ENCODE measurements at regions of chr1 and their contacts with region 1.

Region 1: GRCh38 chr1:154558575-154559465 is at the start of gene UBE2Q1:
- DNase-seq: peak; percentile 98 to 100 (median 99)

Region 2: DNA sequence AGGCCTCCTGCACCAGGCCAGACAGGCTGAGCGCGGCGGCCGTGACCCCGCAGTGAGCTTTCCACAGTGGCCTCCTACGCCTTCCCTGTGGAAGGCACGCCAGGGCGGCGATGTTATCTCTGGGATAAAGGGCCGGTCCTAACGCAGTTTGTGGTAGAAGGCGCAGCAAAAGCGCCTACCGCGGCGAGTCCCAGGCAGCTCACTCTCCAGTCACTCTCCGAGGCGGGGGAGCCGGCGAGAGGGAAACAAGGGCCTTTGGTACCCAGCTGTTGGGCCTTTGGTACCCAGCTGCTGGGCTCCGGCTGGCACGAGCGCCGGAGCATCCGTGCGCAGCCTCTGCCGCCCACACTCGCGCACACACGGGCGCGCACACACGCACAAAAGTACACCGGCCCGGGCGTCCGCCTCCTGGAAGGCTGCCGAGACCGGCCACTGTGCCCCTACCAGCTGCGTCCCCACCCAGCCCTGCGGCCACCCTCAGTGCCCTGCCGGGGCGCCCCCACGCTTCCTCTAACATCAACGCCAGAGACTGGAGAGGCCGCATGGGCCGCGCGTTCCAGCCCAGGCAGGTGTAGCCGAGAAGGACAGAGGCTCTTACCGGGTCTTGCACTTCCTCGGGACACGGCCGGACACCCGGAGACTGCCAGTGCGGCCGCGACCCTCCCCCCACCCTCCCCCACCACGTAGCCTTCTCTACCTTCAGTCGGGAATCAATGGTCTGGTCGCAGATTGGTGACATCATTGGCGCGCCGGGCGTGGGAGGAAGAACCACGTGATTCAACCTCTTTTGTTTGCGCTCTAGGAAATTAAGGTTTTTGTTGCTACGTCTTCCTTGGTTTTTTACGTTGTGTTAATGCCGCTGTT is 68.7 kb after region 1 on chr1:
- intact Hi-C with region 1: loop called (anchors 2 kb)
- DNase-seq: peak; percentile 79 to 97 (median 90)

Region 3: DNA sequence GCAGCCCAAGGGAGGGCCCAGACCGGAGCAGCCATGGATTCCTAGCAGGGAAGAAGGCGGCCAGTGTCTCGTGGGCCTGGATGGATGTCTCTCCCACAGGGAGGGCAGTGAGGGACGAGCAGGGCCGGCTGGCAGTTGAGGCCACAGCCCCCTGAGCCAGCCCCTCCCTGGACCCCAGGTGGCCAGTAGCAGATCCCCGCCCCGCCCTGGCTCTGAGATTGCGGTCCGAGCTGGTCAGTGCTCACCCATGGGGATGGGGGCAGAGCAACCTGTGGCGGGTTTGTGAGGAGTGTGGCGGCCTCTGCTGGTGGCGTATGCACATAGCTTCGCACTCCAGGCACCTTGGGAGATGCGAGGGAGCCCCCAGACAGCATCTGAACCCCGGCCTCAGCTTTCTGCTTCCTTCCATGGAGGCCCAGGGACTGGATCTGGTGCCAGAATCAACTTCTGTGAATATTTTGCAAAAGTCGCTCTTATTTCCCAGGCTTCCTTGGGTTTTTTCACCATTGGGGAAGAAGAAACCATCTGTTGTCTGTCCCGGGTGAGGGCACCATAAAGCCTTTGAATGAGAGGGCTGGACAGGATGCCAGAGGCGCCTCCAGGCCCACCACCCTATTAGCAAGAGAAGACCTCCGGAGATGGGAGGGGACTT is 319.7 kb after region 1 on chr1:
- intact Hi-C with region 1: loop called (anchors 1 kb)
- DNase-seq: peak; percentile 67 to 98 (median 86)

Region 4: GRCh38 chr1:154974063-154974807 is 415.4 kb after region 1 on chr1 and contains the start of gene CKS1B:
- intact Hi-C with region 1: loop called (anchors 10 kb)
- DNase-seq: peak; percentile 91 to 100 (median 96)